ENCODE measurements at regions of chr5 and their contacts with region 1.

Region 1: GRCh38 chr5:73902327-73903051 is 276.5 kb downstream of the ARHGEF28 start:
- DNase-seq: peak in 5 of 14 experiments; percentile 1 to 69 (median 55)
- ATAC-seq: no peak
- H3K4me3 ChIP-seq: no peak overlapping the region
- H3K4me3 Mint-ChIP-seq: no peak overlapping the region
- H3K27ac ChIP-seq: no peak overlapping the region
- H3K27ac Mint-ChIP-seq: no peak overlapping the region
- H3K4me1 ChIP-seq: no peaks in the 10 kb centered on the region
- H3K4me1 Mint-ChIP-seq: no peaks in the 10 kb centered on the region
- H3K27me3 ChIP-seq: peaks cover 0 to 4% of the 10 kb centered on the region in 2 experiments
- H3K27me3 Mint-ChIP-seq: peaks cover 26% of the 10 kb centered on the region
- CTCF ChIP-seq: peak; percentile 94

Region 2: GRCh38 chr5:73591102-73591695 is 311.3 kb before region 1 on chr5:
- CTCF ChIA-PET with region 1: no interaction called
- POLR2A ChIA-PET with region 1: no interaction called
- intact Hi-C with region 1: loop called in 1 of 2 experiments (anchors 10 kb)
- DNase-seq: peak in 10 of 14 experiments; percentile 9 to 83 (median 40)
- ATAC-seq: peak; percentile 62
- H3K4me3 ChIP-seq: no peak overlapping the region
- H3K4me3 Mint-ChIP-seq: no peak overlapping the region
- H3K27ac ChIP-seq: no peak overlapping the region
- H3K27ac Mint-ChIP-seq: no peak overlapping the region
- H3K4me1 ChIP-seq: no peaks in the 10 kb centered on the region
- H3K4me1 Mint-ChIP-seq: no peaks in the 10 kb centered on the region
- H3K27me3 ChIP-seq: no peaks in the 10 kb centered on the region
- H3K27me3 Mint-ChIP-seq: no peaks in the 10 kb centered on the region
- CTCF ChIP-seq: peak; percentile 92

Region 3: DNA sequence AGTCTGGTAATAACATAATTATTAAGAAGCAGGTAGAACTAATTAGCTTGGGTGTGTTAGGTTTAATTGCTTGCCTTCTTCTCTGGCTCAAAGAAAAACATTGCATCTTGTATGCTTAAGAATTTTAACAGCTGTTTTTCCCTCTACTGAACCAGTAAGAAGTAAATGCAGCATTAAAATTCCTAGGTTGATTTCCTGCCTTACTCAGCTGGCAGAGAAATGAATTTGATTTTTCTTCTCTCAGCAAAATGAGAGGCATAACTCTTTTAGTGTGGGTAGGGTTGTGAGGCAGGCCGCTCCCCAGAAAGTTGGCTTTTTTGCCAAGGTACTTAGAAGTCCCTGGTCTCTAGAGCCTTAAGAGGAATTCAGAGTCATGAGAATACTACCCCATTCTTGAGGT is 26.0 kb after region 1 on chr5:
- CTCF ChIA-PET with region 1: no interaction called
- POLR2A ChIA-PET with region 1: no interaction called
- intact Hi-C with region 1: no loop called
- DNase-seq: no peak
- ATAC-seq: no peak
- H3K4me3 ChIP-seq: no peak overlapping the region
- H3K4me3 Mint-ChIP-seq: no peak overlapping the region
- H3K27ac ChIP-seq: no peak overlapping the region
- H3K27ac Mint-ChIP-seq: no peak overlapping the region
- H3K4me1 ChIP-seq: no peaks in the 10 kb centered on the region
- H3K4me1 Mint-ChIP-seq: no peaks in the 10 kb centered on the region
- H3K27me3 ChIP-seq: peaks cover 0 to 3% of the 10 kb centered on the region in 2 experiments
- H3K27me3 Mint-ChIP-seq: peaks cover 15% of the 10 kb centered on the region
- CTCF ChIP-seq: no peak

Region 4: DNA sequence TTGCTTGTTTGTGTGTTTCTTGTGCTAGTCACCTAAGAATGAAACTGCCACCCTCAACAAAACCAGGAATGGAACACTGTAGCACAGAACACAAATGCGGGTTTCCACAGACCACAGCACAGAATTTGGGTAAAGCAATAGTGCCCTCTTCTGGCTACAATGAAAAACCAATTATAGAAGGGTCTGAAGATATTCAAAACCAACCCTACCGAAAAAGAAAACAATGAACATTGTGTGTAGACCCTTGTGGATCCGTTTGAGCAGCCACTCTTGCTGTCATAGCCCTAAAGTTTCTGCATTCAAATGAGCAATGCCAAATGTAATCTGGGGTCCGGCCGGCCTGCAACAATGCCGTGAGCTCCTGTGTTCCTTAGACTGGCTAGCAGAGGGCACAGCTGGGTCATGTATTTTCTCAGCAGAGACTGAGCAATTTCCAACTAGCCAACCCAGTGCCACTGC is 746.4 kb after region 1 on chr5:
- CTCF ChIA-PET with region 1: interaction called, 7 read pairs
- POLR2A ChIA-PET with region 1: no interaction called
- intact Hi-C with region 1: loop called (anchors 1 kb)
- DNase-seq: peak in 6 of 14 experiments; percentile 11 to 76 (median 49)
- ATAC-seq: peak; percentile 83
- H3K4me3 ChIP-seq: no peak overlapping the region
- H3K4me3 Mint-ChIP-seq: no peak overlapping the region
- H3K27ac ChIP-seq: no peak overlapping the region
- H3K27ac Mint-ChIP-seq: no peak overlapping the region
- H3K4me1 ChIP-seq: peaks cover 4% of the 10 kb centered on the region
- H3K4me1 Mint-ChIP-seq: no peaks in the 10 kb centered on the region
- H3K27me3 ChIP-seq: peaks cover 0 to 3% of the 10 kb centered on the region in 2 experiments
- H3K27me3 Mint-ChIP-seq: peaks cover 9% of the 10 kb centered on the region
- CTCF ChIP-seq: peak; percentile 91

Region 5: GRCh38 chr5:74903165-74903787 is 1000.8 kb after region 1 on chr5:
- CTCF ChIA-PET with region 1: no interaction called
- POLR2A ChIA-PET with region 1: no interaction called
- intact Hi-C with region 1: loop called in 1 of 2 experiments (anchors 5 kb)
- DNase-seq: peak in 8 of 14 experiments; percentile 5 to 52 (median 26)
- ATAC-seq: peak; percentile 81
- H3K4me3 ChIP-seq: no peak overlapping the region
- H3K4me3 Mint-ChIP-seq: no peak overlapping the region
- H3K27ac ChIP-seq: no peak overlapping the region
- H3K27ac Mint-ChIP-seq: no peak overlapping the region
- H3K4me1 ChIP-seq: no peaks in the 10 kb centered on the region
- H3K4me1 Mint-ChIP-seq: no peaks in the 10 kb centered on the region
- H3K27me3 ChIP-seq: no peaks in the 10 kb centered on the region
- H3K27me3 Mint-ChIP-seq: no peaks in the 10 kb centered on the region
- CTCF ChIP-seq: peak; percentile 37

Region 6: DNA sequence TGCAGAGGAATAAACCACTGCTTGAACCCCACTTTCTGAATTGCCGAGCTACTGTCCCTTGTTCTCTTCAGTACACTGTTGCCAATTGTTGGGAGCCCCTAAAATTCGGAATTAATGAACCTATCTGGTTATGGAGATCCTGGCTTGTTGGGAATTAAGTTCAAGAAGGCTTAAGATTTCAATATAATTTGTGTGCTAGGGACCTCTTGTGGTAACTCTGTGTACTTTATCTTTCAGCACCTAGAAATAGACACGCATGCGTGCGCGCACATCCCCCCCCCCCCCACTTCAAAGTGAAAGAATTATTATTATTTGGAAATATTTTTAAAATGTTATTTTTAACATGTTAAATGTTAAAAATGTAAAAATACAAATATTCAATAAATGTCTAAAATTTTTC is 1017.0 kb after region 1 on chr5:
- CTCF ChIA-PET with region 1: no interaction called
- POLR2A ChIA-PET with region 1: interaction called, 3 read pairs
- intact Hi-C with region 1: loop called (anchors 5 kb)
- DNase-seq: peak in 4 of 14 experiments; percentile 35 to 69 (median 61)
- ATAC-seq: peak; percentile 69
- H3K4me3 ChIP-seq: no peak overlapping the region
- H3K4me3 Mint-ChIP-seq: no peak overlapping the region
- H3K27ac ChIP-seq: no peak overlapping the region
- H3K27ac Mint-ChIP-seq: no peak overlapping the region
- H3K4me1 ChIP-seq: no peaks in the 10 kb centered on the region
- H3K4me1 Mint-ChIP-seq: no peaks in the 10 kb centered on the region
- H3K27me3 ChIP-seq: no peaks in the 10 kb centered on the region
- H3K27me3 Mint-ChIP-seq: no peaks in the 10 kb centered on the region
- CTCF ChIP-seq: peak; percentile 62

Region 7: DNA sequence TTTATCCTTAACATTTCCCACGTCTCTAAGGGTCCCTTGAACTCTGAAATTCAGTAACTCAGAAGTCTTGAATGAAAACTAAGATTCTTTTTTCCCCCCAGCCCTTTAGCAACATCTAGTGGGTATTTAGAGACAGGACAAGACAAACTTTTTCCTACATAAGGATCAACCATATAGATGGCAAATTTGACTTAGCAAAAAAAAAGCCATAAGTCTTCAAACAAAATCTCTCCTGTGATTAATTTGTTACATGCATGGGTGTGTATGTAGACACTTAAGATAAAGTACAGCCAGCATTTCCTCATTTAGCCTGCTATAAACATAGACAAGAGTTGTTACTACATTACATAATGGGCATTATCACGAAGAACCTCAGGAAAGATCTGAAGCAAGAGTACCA is 1363.2 kb after region 1 on chr5:
- CTCF ChIA-PET with region 1: no interaction called
- POLR2A ChIA-PET with region 1: no interaction called
- intact Hi-C with region 1: loop called (anchors 5 kb)
- DNase-seq: peak in 3 of 14 experiments; percentile 57 to 68 (median 65)
- ATAC-seq: peak; percentile 74
- H3K4me3 ChIP-seq: no peak overlapping the region
- H3K4me3 Mint-ChIP-seq: no peak overlapping the region
- H3K27ac ChIP-seq: no peak overlapping the region
- H3K27ac Mint-ChIP-seq: no peak overlapping the region
- H3K4me1 ChIP-seq: no peaks in the 10 kb centered on the region
- H3K4me1 Mint-ChIP-seq: no peaks in the 10 kb centered on the region
- H3K27me3 ChIP-seq: no peaks in the 10 kb centered on the region
- H3K27me3 Mint-ChIP-seq: peaks cover 11% of the 10 kb centered on the region
- CTCF ChIP-seq: peak; percentile 78

Region 8: GRCh38 chr5:75681125-75681830 is 1778.8 kb after region 1 on chr5:
- CTCF ChIA-PET with region 1: no interaction called
- POLR2A ChIA-PET with region 1: no interaction called
- intact Hi-C with region 1: loop called in 1 of 2 experiments (anchors 10 kb)
- DNase-seq: peak in 3 of 14 experiments; percentile 58 to 61 (median 59)
- ATAC-seq: peak; percentile 38
- H3K4me3 ChIP-seq: no peak overlapping the region
- H3K4me3 Mint-ChIP-seq: no peak overlapping the region
- H3K27ac ChIP-seq: no peak overlapping the region
- H3K27ac Mint-ChIP-seq: no peak overlapping the region
- H3K4me1 ChIP-seq: no peaks in the 10 kb centered on the region
- H3K4me1 Mint-ChIP-seq: peaks cover 11% of the 10 kb centered on the region
- H3K27me3 ChIP-seq: no peaks in the 10 kb centered on the region
- H3K27me3 Mint-ChIP-seq: no peaks in the 10 kb centered on the region
- CTCF ChIP-seq: peak; percentile 82